H1 (cell line): ENCODE measurements at regions of chr17 and their contacts with region 1.

Region 1: DNA sequence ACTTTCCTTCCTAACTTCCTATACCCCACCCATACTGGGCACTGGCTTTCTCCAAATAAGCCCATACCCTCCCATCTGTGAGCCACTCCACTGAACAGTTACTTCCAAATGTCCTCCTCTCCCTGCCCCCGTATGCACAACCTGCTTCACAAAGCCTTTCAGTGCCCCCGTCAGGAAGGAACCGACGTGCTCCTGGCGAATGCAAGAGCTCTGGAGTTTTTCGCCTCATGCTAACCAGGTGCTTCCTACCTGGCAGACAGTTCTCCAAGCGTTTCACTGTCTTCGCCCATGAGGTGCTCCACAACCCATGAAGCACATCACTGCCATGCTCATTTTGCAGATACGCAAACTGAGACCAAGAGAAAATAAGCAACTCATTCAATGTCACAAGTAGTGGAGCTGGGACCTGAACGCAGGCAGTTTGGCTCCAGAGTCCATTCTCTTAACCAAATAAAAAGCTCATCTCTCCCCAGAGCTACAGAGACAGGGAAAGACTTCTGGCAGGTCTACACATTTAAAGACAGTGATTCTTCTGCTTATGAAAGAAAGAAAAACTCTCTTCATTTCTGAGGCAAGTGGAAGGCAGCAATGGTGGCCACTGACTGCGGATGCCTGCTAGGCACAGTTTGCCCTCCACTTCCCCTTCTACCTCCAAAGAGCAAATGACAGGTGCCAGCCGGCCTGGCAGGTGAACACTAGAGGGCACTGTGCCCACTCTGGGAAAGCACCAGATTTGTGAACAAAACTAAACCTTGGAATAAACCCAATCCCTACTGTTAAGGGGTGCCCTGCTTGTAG is 23.8 kb downstream of the SPHK1 start:
- DNase-seq: peak in 1 of 2 experiments; percentile 88
- H3K4me3 ChIP-seq: no peak overlapping the region
- H3K27ac ChIP-seq: no peak overlapping the region
- H3K4me1 ChIP-seq: no peaks in the 10 kb centered on the region; a peak in 2 of 7 replicates
- H3K27me3 ChIP-seq: no peaks in the 10 kb centered on the region
- CTCF ChIP-seq: peak; percentile 83 to 88 (median 87)
- EP300 ChIP-seq: no peak
- POLR2A ChIP-seq: no peak
- RAD21 ChIP-seq: peak; percentile 80 to 83

Region 2: GRCh38 chr17:76384222-76384986 is 23.8 kb before region 1 on chr17 and contains the start of gene SPHK1:
- CTCF ChIA-PET with region 1: interaction called, 84 read pairs
- POLR2A ChIA-PET with region 1: no interaction called
- DNase-seq: peak in 1 of 2 experiments; percentile 83
- H3K4me3 ChIP-seq: peak within 1 kb of the TSS; percentile 39 to 80 (median 60)
- H3K27ac ChIP-seq: no peak within 1 kb of the TSS
- H3K4me1 ChIP-seq: peaks cover 5 to 46% (median 22%) of the 10 kb centered on the region in 4 experiments
- H3K27me3 ChIP-seq: peaks cover 18 to 47% (median 33%) of the 10 kb centered on the region in 4 experiments; a peak in 6 of 7 replicates
- CTCF ChIP-seq: no peak
- EP300 ChIP-seq: no peak
- POLR2A ChIP-seq: no peak
- RAD21 ChIP-seq: no peak
- total RNA-seq, gene SPHK1: 2.4 and 2.6 TPM in 2 replicates

Region 3: DNA sequence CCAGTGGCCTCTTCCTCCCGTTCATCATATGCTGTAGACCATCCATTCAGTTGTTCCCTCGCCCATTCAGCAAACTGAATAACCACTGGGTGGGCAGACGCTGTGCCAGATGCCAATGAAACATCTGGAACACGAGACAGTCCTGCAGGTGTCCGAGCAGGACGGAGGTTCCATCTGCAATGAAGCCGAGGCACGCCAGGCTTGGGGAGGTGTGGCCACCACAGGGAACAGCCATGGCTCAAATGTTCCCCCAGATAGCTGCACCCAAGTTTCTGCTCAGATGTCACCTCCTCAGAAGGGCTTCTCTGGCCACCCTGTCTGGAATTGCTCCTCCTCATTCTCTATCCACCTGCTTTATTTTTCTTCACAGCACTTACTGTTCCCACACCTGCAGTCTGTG is 14.2 kb after region 1 on chr17:
- CTCF ChIA-PET with region 1: interaction called, 34 read pairs
- POLR2A ChIA-PET with region 1: interaction called, 5 read pairs
- DNase-seq: no peak
- H3K4me3 ChIP-seq: no peak overlapping the region
- H3K27ac ChIP-seq: no peak overlapping the region; the same call in 1 of the 2 replicates
- H3K4me1 ChIP-seq: peaks cover 0 to 8% (median 5%) of the 10 kb centered on the region in 4 experiments; a peak in 6 of 7 replicates
- H3K27me3 ChIP-seq: no peaks in the 10 kb centered on the region
- CTCF ChIP-seq: no peak
- EP300 ChIP-seq: peak in 1 of 2 experiments; percentile 53; a peak in 1 of 3 replicates
- POLR2A ChIP-seq: no peak
- RAD21 ChIP-seq: no peak

Region 4: DNA sequence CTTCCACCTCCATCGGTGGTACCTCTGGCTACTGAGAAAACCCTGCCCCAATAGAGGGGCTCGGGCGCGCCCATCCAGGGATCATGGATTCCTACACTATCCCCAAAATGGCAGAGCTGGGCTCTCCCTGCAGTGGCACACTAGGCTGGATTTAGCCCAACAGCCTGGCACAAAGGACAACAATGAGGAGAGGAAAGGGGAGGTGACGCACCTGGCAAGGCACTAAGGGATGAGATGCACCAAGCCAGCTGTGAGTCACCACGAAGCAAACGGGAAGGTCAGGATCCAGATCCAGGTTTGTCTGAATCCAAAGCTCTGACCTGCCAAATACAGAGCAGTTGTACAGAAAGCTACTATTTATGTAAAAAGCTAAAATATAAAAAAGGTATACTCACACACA is 26.6 kb after region 1 on chr17:
- CTCF ChIA-PET with region 1: interaction called, 14 read pairs
- POLR2A ChIA-PET with region 1: no interaction called
- DNase-seq: no peak
- H3K4me3 ChIP-seq: no peak overlapping the region
- H3K27ac ChIP-seq: no peak overlapping the region
- H3K4me1 ChIP-seq: peaks cover 0 to 19% (median 15%) of the 10 kb centered on the region in 4 experiments
- H3K27me3 ChIP-seq: no peaks in the 10 kb centered on the region
- CTCF ChIP-seq: no peak
- EP300 ChIP-seq: no peak
- POLR2A ChIP-seq: no peak
- RAD21 ChIP-seq: no peak

Region 5: GRCh38 chr17:76452660-76453430 is 44.6 kb after region 1 on chr17 and contains the start of gene UBE2O:
- CTCF ChIA-PET with region 1: interaction called, 197 read pairs
- POLR2A ChIA-PET with region 1: interaction called, 7 read pairs
- DNase-seq: peak; percentile 83 to 98
- H3K4me3 ChIP-seq: peak within 1 kb of the TSS; percentile 67 to 84 (median 80)
- H3K27ac ChIP-seq: 0 out of 2 replicates have a peak within 1 kb of the TSS, but pooled peaks have one; percentile 0
- H3K4me1 ChIP-seq: peaks cover 7 to 22% (median 13%) of the 10 kb centered on the region in 4 experiments
- H3K27me3 ChIP-seq: no peaks in the 10 kb centered on the region
- CTCF ChIP-seq: peak; percentile 24 to 58 (median 52); a peak in 3 of 4 replicates
- EP300 ChIP-seq: peak in 1 of 2 experiments; percentile 42; a peak in 1 of 3 replicates
- POLR2A ChIP-seq: 0 out of 3 replicates have a peak, but pooled peaks of 1 of the 2 experiments have one; percentile 21
- RAD21 ChIP-seq: no peak
- total RNA-seq, gene UBE2O: 63.0 and 65.6 TPM in 2 replicates

Region 6: DNA sequence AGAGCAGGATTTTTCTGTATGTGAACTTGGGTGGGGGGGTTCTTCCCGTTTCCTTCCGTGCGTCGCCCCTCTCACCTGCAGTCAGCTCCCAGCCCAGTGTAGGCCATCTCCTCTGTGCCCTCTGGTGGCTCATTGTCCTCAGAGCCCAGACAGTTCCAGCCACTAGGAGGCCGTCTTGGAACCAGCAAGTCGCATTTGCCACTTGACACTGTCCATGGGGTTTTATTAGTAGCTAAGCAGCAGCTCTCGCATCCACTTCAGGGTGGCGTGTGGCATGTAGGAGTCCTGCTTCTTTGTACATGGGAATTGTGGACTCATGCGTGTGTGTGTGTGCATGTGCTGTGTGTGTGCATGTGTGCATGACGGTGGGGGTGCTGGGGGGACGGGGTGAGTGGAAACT is 806.5 kb after region 1 on chr17:
- CTCF ChIA-PET with region 1: no interaction called
- POLR2A ChIA-PET with region 1: no interaction called
- DNase-seq: peak; percentile 27 to 63
- H3K4me3 ChIP-seq: no peak overlapping the region
- H3K27ac ChIP-seq: no peak overlapping the region
- H3K4me1 ChIP-seq: no peaks in the 10 kb centered on the region; a peak in 1 of 7 replicates
- H3K27me3 ChIP-seq: no peaks in the 10 kb centered on the region
- CTCF ChIP-seq: peak; percentile 87 to 99 (median 95)
- EP300 ChIP-seq: no peak
- POLR2A ChIP-seq: no peak
- RAD21 ChIP-seq: peak; percentile 67 to 77